ENCODE measurements at regions of chr3 and their contacts with region 1.

Region 1: DNA sequence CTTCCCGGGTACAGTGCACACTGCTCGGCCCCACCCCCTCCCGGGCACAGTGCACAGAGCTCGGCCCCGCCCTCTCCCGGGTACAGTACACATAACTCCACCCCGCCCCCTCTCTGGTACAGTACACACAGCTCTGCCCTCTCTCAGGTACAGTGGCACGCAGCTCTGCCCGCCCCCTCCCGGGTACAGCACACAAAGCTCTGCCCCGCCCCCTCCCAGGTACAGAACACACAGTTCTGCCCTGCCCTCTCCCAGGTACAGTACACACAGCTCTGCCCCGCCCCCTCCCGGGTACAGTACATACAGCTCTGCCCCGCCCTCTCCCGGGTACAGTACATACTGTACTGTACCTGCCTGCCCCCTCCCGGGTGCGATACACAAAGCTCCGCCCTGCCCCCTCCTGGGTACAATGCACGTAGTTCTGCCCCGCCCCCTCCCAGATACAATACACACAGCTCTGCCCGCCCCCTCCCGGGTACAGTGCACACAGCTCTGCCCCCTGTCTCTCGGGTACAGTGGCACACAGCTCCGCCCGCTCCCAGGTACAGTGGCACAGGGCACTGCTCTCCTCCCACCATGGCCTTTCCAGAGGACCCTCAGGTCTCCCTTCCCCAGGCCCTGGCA is 16.4 kb upstream of the PRR20G start:
- DNase-seq: peak; percentile 82
- H3K4me3 ChIP-seq: no peak overlapping the region
- H3K27ac ChIP-seq: peak overlapping the region; percentile 50
- H3K4me1 ChIP-seq: peaks cover 22% of the 10 kb centered on the region
- H3K27me3 ChIP-seq: no peaks in the 10 kb centered on the region
- CTCF ChIP-seq: peak in 1 of 2 donors; percentile 41

Region 2: DNA sequence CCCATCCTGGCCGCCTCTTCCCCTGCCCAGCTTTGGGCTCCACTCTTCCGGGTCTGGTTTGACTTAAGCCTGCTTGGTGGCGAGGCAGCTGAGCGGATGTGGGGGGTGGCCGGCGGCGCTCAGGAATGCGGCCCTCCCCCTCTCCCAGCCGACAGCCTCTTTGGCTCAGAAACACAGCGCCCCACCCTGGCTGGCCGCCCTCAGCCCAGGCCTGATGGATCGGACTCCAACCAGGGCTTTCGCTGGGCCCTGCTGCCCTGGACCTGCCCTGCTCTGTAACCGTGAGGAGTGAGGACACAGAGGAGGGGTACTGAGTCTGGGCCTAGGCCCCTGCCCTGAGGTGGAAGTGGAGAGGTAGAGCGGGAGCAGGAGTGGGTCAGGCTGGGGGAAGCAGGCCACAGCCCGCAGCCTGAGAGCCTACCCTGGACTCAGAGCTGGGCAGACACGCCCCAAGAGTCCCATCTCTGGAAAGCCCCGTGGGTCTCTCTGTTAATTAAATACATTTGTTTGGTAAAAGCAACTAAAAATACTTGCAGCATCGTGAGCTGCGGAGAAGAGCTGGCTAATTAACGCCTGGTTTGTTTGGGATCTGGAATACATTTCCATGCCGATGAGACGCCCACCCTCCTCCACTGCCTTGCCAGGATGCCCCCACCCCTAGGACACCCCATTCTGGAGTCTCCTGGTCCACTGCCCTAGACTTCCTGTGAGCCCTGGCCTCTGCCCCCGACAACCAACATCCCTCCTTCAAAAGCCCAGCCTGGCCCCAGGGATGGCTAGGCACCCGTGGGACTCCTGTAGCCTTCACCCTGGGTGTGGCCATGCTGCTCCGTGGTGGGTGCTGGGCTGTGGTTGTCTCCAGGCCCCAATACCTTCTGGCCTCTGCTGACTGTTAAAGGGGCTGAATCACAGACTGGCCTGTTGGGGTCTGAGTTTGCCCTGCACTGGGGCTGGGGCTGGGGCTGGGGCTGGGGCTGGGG is 301.7 kb before region 1 on chr3:
- CTCF ChIA-PET with region 1: no interaction called
- dilution Hi-C with region 1: no loop called
- in situ Hi-C with region 1: no loop called
- intact Hi-C with region 1: loop called (anchors 2 kb)
- DNase-seq: peak; percentile 82
- H3K4me3 ChIP-seq: peak overlapping the region in 2 of 3 experiments; percentile 18 to 20
- H3K27ac ChIP-seq: peak overlapping the region; percentile 42
- H3K4me1 ChIP-seq: peaks cover 63% of the 10 kb centered on the region
- H3K27me3 ChIP-seq: no peaks in the 10 kb centered on the region
- CTCF ChIP-seq: peak; percentile 45 to 64

Region 3: DNA sequence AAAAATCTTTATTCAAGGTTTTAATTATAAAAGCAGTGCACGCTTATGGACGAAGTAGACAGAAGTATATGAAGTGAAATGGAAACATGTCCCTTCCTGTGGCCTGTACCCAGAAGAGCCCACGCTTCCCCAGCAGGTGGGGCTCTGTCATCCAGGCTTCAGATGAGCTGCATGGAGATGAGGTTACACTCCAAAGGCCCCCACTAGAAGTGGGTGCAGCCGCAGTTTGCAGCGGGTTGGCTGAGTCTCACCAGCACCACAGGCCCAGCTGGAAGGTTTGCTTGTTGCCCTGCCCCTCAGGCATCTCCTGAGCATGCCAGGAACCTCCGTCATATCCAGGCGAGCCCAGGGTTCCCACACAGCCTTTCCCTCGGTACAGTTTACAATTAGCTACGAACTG is 49.5 kb before region 1 on chr3:
- CTCF ChIA-PET with region 1: interaction called, 19 read pairs
- dilution Hi-C with region 1: loop called (anchors 5 kb)
- in situ Hi-C with region 1: no loop called
- intact Hi-C with region 1: loop called (anchors 1 kb)
- DNase-seq: peak; percentile 67
- H3K4me3 ChIP-seq: no peak overlapping the region
- H3K27ac ChIP-seq: no peak overlapping the region
- H3K4me1 ChIP-seq: no peaks in the 10 kb centered on the region
- H3K27me3 ChIP-seq: no peaks in the 10 kb centered on the region
- CTCF ChIP-seq: peak; percentile 48 to 75

Region 4: DNA sequence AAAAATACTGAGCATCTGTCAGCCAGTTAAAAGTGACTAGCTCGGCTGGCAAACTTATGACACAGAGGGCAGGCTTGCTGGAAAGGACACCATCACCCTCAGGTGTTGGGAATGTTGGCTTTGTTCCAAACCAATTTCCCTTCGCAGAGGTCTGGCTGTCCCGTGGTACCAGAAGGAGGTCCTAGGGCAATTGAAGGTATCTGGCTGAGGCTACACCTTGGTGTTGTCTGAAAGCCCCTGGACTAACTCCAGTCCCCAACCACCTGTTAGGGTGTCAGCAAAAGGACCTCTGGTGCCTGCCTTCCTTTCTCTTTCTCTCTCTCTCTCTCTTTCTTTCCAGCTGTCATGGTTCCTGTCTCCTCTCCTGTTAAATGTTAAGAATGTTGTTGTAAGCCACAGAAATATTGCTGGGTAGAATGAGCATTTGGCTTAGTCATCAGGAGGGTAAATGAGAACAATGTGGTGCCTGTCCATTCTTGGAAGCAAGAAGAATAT is 28.9 kb before region 1 on chr3:
- CTCF ChIA-PET with region 1: no interaction called
- dilution Hi-C with region 1: no loop called
- in situ Hi-C with region 1: no loop called
- intact Hi-C with region 1: loop called (anchors 1 kb)
- DNase-seq: peak; percentile 93
- H3K4me3 ChIP-seq: peak overlapping the region in 1 of 3 experiments; percentile 19
- H3K27ac ChIP-seq: peak overlapping the region; percentile 84
- H3K4me1 ChIP-seq: peaks cover 48% of the 10 kb centered on the region
- H3K27me3 ChIP-seq: no peaks in the 10 kb centered on the region
- CTCF ChIP-seq: no peak